Esophagus muscularis mucosa (tissue), 4 donors: ENCODE measurements at regions of chr7 and their contacts with region 1.

Region 1: DNA sequence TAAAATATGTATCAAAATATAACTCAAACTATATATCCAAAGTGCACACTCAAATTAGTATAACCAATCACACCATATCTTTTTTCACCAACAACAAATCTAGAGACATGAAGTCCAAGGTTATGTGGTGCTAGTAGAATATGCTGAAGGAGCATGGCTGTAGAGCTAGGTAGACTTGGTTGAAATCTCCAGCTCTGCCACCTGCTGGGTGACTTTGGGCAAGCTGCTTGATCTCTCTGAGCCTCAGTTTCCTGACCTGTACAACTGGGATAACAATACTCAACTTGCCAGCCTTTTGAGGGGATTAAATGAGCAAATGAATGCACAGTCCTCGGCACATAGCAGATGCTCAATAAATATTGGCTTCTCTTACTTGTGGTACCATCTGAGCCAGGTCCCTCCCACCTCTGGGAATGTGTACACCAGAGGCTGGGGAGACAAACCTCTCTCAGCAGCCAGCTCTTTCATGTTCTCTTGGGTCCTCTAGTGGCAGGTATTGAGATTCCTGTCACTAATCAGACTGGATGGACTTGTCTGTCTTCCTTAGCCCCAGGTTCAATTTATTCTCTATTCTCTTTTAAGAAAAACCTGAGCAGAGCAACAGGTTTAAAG is 94.2 kb upstream of the PDE1C start:
- DNase-seq: no peak
- H3K4me3 ChIP-seq: no peak overlapping the region
- H3K27ac ChIP-seq: no peak overlapping the region
- H3K4me1 ChIP-seq: peaks cover 20 to 27% (median 24%) of the 10 kb centered on the region in 4 donors
- H3K27me3 ChIP-seq: no peaks in the 10 kb centered on the region
- CTCF ChIP-seq: peak; percentile 26 to 52 (median 49)
- EP300 ChIP-seq: no peak
- POLR2A ChIP-seq: no peak

Region 2: GRCh38 chr7:31782411-31782991 is 382.0 kb before region 1 on chr7:
- intact Hi-C with region 1: loop called (anchors 5 kb)
- DNase-seq: no peak
- H3K4me3 ChIP-seq: no peak overlapping the region
- H3K27ac ChIP-seq: no peak overlapping the region
- H3K4me1 ChIP-seq: peaks cover 0 to 16% (median 10%) of the 10 kb centered on the region in 4 donors
- H3K27me3 ChIP-seq: no peaks in the 10 kb centered on the region
- CTCF ChIP-seq: peak; percentile 66 to 79 (median 67)
- EP300 ChIP-seq: no peak
- POLR2A ChIP-seq: no peak

Region 3: DNA sequence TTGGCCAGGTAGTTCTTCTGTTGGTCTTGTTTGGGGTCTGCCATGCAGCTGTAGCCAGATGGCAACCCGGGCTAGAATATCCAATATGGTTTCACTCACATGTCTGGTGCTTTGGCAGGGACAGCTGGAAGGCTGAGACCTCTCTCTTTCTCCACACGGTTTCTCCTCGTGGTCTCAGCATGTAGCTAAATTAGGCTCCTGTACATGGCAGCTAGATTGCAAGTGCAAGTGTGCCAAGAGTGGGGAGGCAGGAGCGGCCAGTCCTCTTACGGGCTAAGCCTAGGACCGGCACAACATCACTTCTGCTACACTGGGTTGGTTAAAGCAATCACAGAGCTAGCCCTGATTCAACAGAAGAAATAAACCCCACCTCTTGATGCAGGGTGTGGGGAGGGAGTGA is 84.9 kb before region 1 on chr7:
- intact Hi-C with region 1: loop called (anchors 5 kb)
- DNase-seq: no peak
- H3K4me3 ChIP-seq: no peak overlapping the region
- H3K27ac ChIP-seq: no peak overlapping the region
- H3K4me1 ChIP-seq: peaks cover 0 to 22% (median 0%) of the 10 kb centered on the region in 4 donors
- H3K27me3 ChIP-seq: no peaks in the 10 kb centered on the region
- CTCF ChIP-seq: no peak
- EP300 ChIP-seq: no peak
- POLR2A ChIP-seq: no peak

Region 4: DNA sequence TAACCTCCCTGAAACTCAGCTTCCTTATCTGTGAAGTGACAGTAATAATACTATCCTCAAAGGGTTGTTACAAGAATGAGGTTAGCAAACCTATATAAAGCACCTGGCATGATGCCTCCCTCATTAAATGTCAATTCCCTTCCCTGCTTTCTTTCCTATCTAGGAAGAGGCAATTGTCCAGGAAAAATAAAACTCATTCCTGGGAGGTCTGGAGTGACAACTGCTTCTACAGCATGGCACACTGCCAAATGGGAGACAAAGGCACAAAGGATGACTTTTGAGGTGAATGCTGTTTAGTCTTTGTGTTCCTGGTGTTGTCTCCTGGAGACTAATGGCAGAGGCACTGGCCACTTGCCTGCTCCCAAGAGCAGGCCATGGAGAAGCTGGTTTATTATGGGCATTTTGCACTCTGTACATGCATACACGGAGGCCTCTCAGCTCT is 62.0 kb before region 1 on chr7:
- intact Hi-C with region 1: no loop called
- DNase-seq: no peak
- H3K4me3 ChIP-seq: no peak overlapping the region
- H3K27ac ChIP-seq: no peak overlapping the region
- H3K4me1 ChIP-seq: peaks cover 7 to 11% (median 9%) of the 10 kb centered on the region in 4 donors
- H3K27me3 ChIP-seq: no peaks in the 10 kb centered on the region
- CTCF ChIP-seq: no peak
- EP300 ChIP-seq: no peak
- POLR2A ChIP-seq: no peak

Region 5: DNA sequence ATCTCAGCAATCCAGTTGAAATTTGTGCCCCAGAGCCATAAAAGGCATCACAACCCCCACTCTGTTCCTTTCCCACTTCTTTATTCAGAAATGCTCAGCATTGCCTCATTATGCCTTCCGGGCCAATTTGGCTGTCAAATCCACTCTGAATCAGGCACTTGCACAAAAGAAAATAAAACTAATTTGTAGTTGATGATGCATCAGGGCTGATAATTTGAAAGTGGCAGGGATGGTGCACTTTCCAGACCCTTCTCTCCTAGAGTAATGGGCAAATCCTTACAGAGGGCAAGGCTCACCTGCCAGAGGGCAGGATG is 53.7 kb after region 1 on chr7:
- intact Hi-C with region 1: no loop called
- DNase-seq: peak; percentile 64
- H3K4me3 ChIP-seq: no peak overlapping the region
- H3K27ac ChIP-seq: no peak overlapping the region
- H3K4me1 ChIP-seq: no peaks in the 10 kb centered on the region
- H3K27me3 ChIP-seq: peaks cover 0 to 4% (median 0%) of the 10 kb centered on the region in 4 donors
- CTCF ChIP-seq: no peak
- EP300 ChIP-seq: no peak
- POLR2A ChIP-seq: no peak

Region 6: DNA sequence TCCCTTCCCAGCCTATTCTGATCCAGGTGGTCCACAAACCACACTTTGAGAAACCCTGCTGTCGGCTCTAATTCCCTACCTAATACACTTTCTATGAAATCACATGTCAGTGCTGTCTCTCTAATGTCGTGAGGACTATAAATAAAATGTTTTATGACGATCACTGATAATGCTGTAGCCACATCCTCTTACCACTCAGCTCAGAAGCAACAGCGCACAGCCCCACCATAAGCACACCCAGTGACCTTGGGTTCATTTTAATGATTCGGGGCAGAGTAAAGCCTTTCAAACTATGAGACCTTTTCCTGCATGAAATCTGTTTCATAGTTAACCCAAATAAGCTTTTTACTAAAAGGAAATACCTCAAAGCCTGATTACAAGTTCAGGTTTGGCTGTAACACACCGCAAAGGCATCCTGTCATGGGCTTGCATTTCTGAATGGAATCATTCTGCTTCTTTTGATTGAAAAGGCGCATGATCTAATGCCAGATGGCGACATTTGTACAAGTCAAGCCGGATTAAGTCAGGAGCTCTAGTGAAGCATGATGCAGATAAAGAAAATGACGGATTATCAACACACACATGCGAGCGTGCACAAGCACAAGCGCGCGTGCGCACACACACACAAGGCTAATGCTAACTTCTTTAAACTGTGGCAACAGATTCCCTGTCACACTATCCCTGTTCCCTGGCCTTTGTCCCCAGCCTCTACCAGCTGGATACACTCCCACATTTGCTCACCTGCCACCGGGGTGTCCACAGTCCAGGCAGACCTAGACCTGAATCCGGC is 86.2 kb after region 1 on chr7:
- intact Hi-C with region 1: no loop called
- DNase-seq: peak; percentile 79
- H3K4me3 ChIP-seq: no peak overlapping the region
- H3K27ac ChIP-seq: no peak overlapping the region
- H3K4me1 ChIP-seq: no peaks in the 10 kb centered on the region
- H3K27me3 ChIP-seq: no peaks in the 10 kb centered on the region
- CTCF ChIP-seq: no peak
- EP300 ChIP-seq: no peak
- POLR2A ChIP-seq: no peak